ENCODE measurements at regions of chr11 and their contacts with region 1.

Region 1: DNA sequence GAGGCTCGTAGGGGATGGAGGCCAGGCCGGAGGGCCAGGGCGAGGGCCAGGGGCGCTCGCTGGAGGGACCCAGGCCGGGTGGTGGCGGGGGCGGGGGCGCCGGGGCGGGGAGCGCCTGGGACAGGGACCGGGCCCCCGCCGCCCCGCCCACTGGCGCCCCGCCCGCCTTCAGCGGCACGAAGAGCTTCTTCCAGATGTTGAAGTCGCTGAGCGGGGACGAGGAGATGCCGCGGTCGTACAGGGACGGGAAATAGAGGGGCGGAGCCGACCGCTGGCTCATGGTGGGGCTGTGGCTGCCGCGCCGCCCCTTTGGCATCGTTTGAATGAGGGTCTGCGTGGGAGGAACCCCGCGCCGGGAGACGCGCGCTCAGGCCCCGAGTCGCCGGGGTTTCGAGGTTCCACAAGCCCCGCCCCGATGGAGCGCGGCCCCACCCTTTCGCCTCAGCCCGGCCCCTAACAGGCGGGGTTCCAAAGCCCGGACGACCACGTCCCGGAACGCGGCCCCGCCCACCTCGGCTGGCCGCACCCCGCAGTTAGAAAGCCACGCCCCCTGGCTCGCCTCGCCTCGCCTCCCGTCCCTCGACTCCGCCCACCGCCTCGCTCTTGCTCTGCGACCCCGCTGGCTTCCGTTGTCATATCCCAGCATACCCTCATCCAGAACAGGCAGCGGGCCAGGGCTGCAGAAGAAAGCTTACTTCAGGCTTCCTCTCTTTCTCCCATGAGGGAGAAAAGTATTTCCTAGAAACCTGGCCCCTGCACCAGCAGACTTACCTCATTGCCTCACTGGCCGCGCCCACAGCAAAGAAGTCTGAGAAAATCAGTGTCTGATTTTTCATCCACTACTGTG is at the start of gene C11orf91:
- DNase-seq: peak; percentile 64
- H3K4me3 ChIP-seq: peak within 1 kb of the TSS; percentile 67
- CTCF ChIP-seq: no peak

Region 2: GRCh38 chr11:33716236-33716635 is 15.6 kb after region 1 on chr11:
- CTCF ChIA-PET with region 1: interaction called, 14 read pairs
- POLR2A ChIA-PET with region 1: interaction called, 3 read pairs
- DNase-seq: no peak
- H3K4me3 ChIP-seq: no peak overlapping the region
- CTCF ChIP-seq: peak; percentile 21

Region 3: DNA sequence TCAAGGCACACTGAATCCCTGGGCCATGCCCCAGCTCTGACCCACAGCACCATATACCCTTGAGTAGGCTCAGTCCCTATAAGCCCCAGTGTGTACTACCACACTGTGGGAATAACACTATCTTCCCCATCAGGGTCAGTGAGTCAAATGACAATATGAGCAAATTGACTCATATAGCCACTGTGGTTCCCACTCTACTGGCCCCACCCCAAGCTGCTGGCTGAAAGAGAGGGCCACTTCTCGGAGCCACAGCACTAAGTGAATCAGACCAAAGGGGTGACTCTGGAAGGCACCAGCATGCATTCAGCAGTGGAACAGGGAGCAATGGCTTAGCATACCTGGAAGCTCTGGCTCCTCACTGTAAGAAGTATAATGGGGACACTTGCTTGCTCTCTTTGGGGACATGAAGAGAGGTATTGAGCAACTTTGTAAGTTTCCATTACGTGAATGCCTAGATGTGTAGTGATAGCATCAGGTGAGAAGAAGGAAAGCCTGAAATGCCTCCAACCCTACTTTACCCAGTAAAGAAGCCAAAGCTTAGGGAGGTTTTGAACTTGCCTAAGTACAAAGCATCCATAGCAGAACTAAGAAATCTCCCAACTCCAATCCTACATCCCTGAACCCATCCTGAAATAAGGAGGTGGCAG is 22.1 kb after region 1 on chr11:
- CTCF ChIA-PET with region 1: interaction called, 12 read pairs
- POLR2A ChIA-PET with region 1: interaction called, 4 read pairs
- DNase-seq: no peak
- H3K4me3 ChIP-seq: no peak overlapping the region
- CTCF ChIP-seq: no peak

Region 4: DNA sequence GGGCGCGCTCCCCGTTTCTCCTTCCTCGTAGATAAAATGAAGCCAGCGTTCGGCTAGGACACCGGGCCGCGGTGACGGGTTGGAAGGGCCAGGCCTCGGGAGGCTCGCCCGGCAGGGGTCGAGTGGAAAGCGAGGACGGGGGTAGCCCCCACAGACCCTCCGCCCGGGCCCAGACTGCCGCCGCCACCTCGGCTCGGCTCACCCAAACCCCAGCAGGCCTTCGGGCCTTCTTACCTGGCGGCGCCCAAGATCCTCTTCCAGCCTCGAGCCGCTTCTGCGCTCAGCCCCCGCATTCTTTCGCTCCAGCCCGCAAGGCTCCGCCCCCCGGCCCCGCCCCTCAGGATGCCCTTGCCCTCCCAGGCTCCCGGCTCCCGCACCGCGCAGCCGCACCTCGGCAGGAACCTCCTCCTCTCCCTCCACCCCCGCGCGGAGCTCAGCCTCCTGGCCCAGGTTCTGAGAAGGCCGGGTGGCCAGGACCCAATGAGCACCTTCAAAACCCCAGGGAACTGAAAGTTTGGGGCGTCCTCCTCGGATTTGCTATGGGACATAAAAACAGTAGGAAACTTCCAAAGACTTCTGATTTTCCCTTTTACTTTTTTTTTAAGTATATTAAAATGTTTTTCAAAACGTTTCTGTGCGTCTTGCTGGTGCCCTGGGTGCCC is 35.6 kb after region 1 on chr11 and contains the start of gene CD59:
- CTCF ChIA-PET with region 1: interaction called, 110 read pairs
- POLR2A ChIA-PET with region 1: interaction called, 13 read pairs
- DNase-seq: peak; percentile 41
- H3K4me3 ChIP-seq: peak within 1 kb of the TSS; percentile 79
- CTCF ChIP-seq: no peak